ENCODE measurements at regions of chr3 and their contacts with region 1.

Region 1: GRCh38 chr3:10505050-10505790 is at the start of gene ATP2B2:
- DNase-seq: peak in 3 of 10 donors; percentile 32 to 71 (median 50)
- H3K4me3 ChIP-seq: peak within 1 kb of the TSS; percentile 25 to 76 (median 61)
- H3K27ac ChIP-seq: peak within 1 kb of the TSS in 56 of 59 donors; percentile 19 to 95 (median 77)
- H3K27me3 ChIP-seq: peaks cover 0 to 11% (median 0%) of the 10 kb centered on the region in 45 donors
- CTCF ChIP-seq: no peak
- total RNA-seq, gene ATP2B2: 87.6 to 447 (median 301) TPM

Region 2: DNA sequence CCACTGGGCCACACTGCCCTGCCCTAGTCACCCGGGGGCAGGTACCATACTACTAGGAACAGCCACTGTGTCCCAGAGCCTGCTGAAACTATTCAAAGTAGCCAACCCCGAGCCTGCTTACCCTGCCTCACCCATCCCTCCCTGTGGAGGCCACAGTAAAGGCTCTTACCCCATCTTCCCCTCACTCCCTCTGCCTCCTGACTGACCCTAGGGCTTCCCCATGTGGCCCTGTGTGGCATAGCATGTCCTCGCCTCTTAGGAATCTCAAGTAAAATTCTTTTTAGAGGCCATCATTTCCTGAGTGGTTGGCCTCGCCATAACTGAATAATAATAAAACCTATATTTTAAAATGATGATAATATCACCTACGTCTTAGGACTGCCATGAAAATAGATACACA is 198.7 kb after region 1 on chr3:
- intact Hi-C with region 1: loop called in 1 of 2 experiments (anchors 10 kb)
- DNase-seq: no peak
- H3K4me3 ChIP-seq: peak overlapping the region in 1 of 59 donors; percentile 54
- H3K27ac ChIP-seq: no peak overlapping the region
- H3K27me3 ChIP-seq: peaks cover 0 to 48% (median 11%) of the 10 kb centered on the region in 45 donors
- CTCF ChIP-seq: peak in 14 of 56 donors; percentile 8 to 31 (median 14)